Activated CD4-positive, alpha-beta memory T cell treated with anti-CD3 and anti-CD28 coated beads, Interleukin-2, amount 10 ng/mL, durations not matched to agents 7 days and 5 days (primary cell): ENCODE measurements at regions of chr1 and their contacts with region 1.

Region 1: GRCh38 chr1:43974443-43975248 is at the start of gene ATP6V0B:
- DNase-seq: peak; percentile 96
- H3K4me3 Mint-ChIP-seq: peak within 1 kb of the TSS; percentile 89
- H3K27ac Mint-ChIP-seq: peak within 1 kb of the TSS; percentile 80
- H3K4me1 Mint-ChIP-seq: peaks cover 63% of the 10 kb centered on the region
- H3K27me3 Mint-ChIP-seq: no peaks in the 10 kb centered on the region
- total RNA-seq, gene ATP6V0B: 121 TPM

Region 2: GRCh38 chr1:43946236-43947060 is 28.2 kb before region 1 on chr1 and contains the start of gene IPO13:
- CTCF ChIA-PET with region 1: interaction called, 10 read pairs
- POLR2A ChIA-PET with region 1: interaction called, 20 read pairs
- DNase-seq: peak; percentile 96
- H3K4me3 Mint-ChIP-seq: peak within 1 kb of the TSS; percentile 89
- H3K27ac Mint-ChIP-seq: peak within 1 kb of the TSS; percentile 88
- H3K4me1 Mint-ChIP-seq: peaks cover 44% of the 10 kb centered on the region
- H3K27me3 Mint-ChIP-seq: no peaks in the 10 kb centered on the region
- total RNA-seq, gene IPO13: 21.5 to 23.5 TPM

Region 3: GRCh38 chr1:43991476-43992231 is 17.0 kb after region 1 on chr1 and contains the start of gene CCDC24:
- CTCF ChIA-PET with region 1: interaction called, 4 read pairs
- POLR2A ChIA-PET with region 1: interaction called, 19 read pairs
- DNase-seq: peak; percentile 78
- H3K4me3 Mint-ChIP-seq: peak within 1 kb of the TSS; percentile 90
- H3K27ac Mint-ChIP-seq: peak within 1 kb of the TSS; percentile 64
- H3K4me1 Mint-ChIP-seq: peaks cover 24% of the 10 kb centered on the region
- H3K27me3 Mint-ChIP-seq: no peaks in the 10 kb centered on the region
- total RNA-seq, gene CCDC24: 1.8 to 2.2 TPM

Region 4: GRCh38 chr1:44112486-44112885 is 137.8 kb after region 1 on chr1:
- CTCF ChIA-PET with region 1: no interaction called
- POLR2A ChIA-PET with region 1: no interaction called
- DNase-seq: no peak
- H3K4me3 Mint-ChIP-seq: no peak overlapping the region
- H3K27ac Mint-ChIP-seq: no peak overlapping the region
- H3K4me1 Mint-ChIP-seq: no peaks in the 10 kb centered on the region
- H3K27me3 Mint-ChIP-seq: peaks cover 16% of the 10 kb centered on the region